PC-3 (cell line): ENCODE measurements at regions of chr5 and their contacts with region 1.

Region 1: DNA sequence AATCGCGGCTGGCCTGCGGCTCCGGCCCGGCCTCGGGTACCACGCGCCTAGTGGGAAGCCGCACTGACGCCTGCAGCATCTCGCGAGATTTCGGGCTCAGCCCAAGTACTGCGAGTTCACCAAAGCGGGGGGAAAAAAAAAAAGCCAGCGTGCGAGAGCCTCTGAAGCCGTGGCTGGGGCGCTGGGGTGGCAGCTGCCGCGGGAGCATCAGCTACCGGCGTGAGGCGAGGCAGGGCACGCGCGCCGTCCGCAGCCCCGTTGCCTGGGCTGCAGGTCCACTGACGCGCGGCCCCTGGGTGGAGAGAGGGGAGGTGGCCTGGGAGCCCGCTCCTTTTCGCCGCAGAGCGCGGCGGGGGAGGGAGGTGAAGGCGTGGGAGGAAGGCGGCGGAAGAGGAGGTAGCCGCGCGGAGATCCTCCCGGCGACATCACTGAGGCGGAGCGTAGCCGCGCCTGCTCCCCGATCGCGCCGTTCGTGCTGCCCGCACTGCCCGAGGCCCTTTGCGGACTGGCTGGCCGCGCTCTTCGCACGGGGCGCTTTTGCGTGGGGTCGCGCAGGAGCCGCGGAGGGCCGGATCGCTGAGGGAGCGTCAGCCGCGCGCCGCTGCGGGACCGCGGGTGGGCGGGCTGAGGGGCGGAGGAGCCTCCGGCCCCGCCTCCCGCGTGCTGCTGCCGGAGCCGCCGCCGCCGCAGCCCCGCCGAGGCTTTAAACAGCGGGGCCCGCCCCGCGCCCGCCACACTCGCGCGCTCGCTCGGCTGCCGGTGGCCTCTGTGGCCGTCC is at the start of gene SLC12A2:
- DNase-seq: peak; percentile 92
- ATAC-seq: peak; percentile 63
- H3K4me3 ChIP-seq: peak within 1 kb of the TSS; percentile 89
- H3K27ac ChIP-seq: peak within 1 kb of the TSS; percentile 84
- H3K4me1 ChIP-seq: peaks cover 42% of the 10 kb centered on the region
- H3K27me3 ChIP-seq: no peaks in the 10 kb centered on the region
- CTCF ChIP-seq: no peak
- total RNA-seq, gene SLC12A2: 33.9 and 42.3 TPM in 2 replicates

Region 2: GRCh38 chr5:127839496-127840197 is 243.6 kb before region 1 on chr5:
- CTCF ChIA-PET with region 1: interaction called, 3 read pairs
- POLR2A ChIA-PET with region 1: no interaction called
- intact Hi-C with region 1: loop called (anchors 2 kb)
- DNase-seq: no peak
- ATAC-seq: no peak
- H3K4me3 ChIP-seq: no peak overlapping the region
- H3K27ac ChIP-seq: peak overlapping the region; percentile 31; the same call in 1 of the 2 replicates
- H3K4me1 ChIP-seq: peaks cover 23% of the 10 kb centered on the region
- H3K27me3 ChIP-seq: no peaks in the 10 kb centered on the region
- CTCF ChIP-seq: no peak

Region 3: DNA sequence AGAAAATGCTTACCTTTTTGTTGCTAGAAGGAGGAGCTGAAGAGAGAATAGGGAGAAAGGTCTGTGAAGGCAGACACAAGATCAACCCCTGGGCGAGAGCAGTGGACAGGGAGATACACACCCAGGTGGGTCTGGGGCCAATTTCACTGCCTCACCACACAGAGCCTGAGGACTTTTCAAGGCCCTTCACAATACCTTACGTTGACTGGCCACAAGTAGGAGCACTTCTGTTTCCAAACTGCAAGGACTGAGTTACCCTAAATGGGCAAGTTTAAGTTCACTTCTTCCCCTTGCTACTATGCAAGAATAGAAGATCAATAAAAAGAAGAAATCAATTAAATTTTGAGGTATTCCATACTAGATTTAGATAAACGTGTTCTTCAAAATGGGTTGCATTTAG is 174.1 kb before region 1 on chr5:
- CTCF ChIA-PET with region 1: interaction called, 3 read pairs
- POLR2A ChIA-PET with region 1: no interaction called
- intact Hi-C with region 1: loop called (anchors 1 kb)
- DNase-seq: peak; percentile 78
- ATAC-seq: peak; percentile 73
- H3K4me3 ChIP-seq: no peak overlapping the region
- H3K27ac ChIP-seq: no peak overlapping the region
- H3K4me1 ChIP-seq: peaks cover 8% of the 10 kb centered on the region
- H3K27me3 ChIP-seq: no peaks in the 10 kb centered on the region
- CTCF ChIP-seq: peak; percentile 89

Region 4: GRCh38 chr5:127981498-127981897 is 101.7 kb before region 1 on chr5:
- CTCF ChIA-PET with region 1: no interaction called
- POLR2A ChIA-PET with region 1: interaction called, 3 read pairs
- intact Hi-C with region 1: loop called (anchors 1 kb)
- DNase-seq: no peak
- ATAC-seq: no peak
- H3K4me3 ChIP-seq: no peak overlapping the region
- H3K27ac ChIP-seq: no peak overlapping the region
- H3K4me1 ChIP-seq: peaks cover 21% of the 10 kb centered on the region
- H3K27me3 ChIP-seq: no peaks in the 10 kb centered on the region
- CTCF ChIP-seq: no peak

Region 5: GRCh38 chr5:128038643-128039042 is 44.6 kb before region 1 on chr5:
- CTCF ChIA-PET with region 1: interaction called, 5 read pairs
- POLR2A ChIA-PET with region 1: interaction called, 4 read pairs
- intact Hi-C with region 1: loop called (anchors 1 kb)
- DNase-seq: peak; percentile 79
- ATAC-seq: peak; percentile 80
- H3K4me3 ChIP-seq: no peak overlapping the region
- H3K27ac ChIP-seq: peak overlapping the region; percentile 79
- H3K4me1 ChIP-seq: peaks cover 27% of the 10 kb centered on the region
- H3K27me3 ChIP-seq: no peaks in the 10 kb centered on the region
- CTCF ChIP-seq: no peak

Region 6: GRCh38 chr5:128163991-128164390 is 80.8 kb after region 1 on chr5:
- CTCF ChIA-PET with region 1: no interaction called
- POLR2A ChIA-PET with region 1: no interaction called
- intact Hi-C with region 1: loop called (anchors 2 kb)
- DNase-seq: peak; percentile 89
- ATAC-seq: peak; percentile 98
- H3K4me3 ChIP-seq: no peak overlapping the region
- H3K27ac ChIP-seq: peak overlapping the region; percentile 55
- H3K4me1 ChIP-seq: peaks cover 14% of the 10 kb centered on the region
- H3K27me3 ChIP-seq: no peaks in the 10 kb centered on the region
- CTCF ChIP-seq: no peak

Region 7: DNA sequence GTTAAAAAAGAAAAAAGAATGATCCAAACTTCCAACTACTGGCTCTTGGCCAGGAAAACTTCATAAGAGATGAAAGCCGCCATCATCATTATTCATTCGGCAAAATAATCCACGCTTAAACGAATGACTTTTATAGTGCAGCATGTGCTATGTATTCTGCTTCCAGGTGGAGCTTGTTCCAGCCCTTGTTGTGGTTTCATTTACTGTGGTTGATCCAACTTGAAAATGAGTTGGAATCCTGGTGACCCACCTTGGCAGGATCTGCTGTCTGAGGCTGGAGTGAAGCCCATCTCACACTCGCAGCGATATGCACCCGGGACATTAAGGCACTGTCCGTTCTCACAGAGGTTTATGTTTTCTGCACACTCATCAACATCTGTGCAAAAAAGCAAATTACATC is 245.2 kb after region 1 on chr5:
- CTCF ChIA-PET with region 1: no interaction called
- POLR2A ChIA-PET with region 1: no interaction called
- intact Hi-C with region 1: no loop called
- DNase-seq: no peak
- ATAC-seq: no peak
- H3K4me3 ChIP-seq: no peak overlapping the region
- H3K27ac ChIP-seq: no peak overlapping the region
- H3K4me1 ChIP-seq: no peaks in the 10 kb centered on the region
- H3K27me3 ChIP-seq: no peaks in the 10 kb centered on the region
- CTCF ChIP-seq: no peak